ENCODE measurements at regions of chr1 and their contacts with region 1.

Region 1: DNA sequence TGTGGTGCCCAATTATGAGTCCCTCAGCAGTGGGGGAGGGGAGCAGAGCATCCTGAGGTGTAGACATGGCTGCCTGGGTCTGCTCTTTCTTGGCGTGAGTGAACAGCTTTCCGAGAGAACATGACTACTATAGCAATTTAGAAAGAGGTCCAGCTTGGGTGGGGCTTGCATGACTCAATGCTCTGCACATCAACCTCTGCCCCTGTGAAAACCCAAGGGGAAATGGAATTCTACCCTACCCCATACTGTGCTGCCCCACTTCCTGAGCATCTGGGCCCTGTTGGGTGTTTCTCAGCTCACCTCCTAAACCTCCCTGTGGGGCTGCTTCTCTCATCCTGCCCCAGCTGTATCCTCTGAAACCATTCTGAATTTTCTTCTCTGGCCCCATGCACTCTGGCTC is 8.2 kb upstream of the AZIN2 start:
- DNase-seq: no peak
- H3K4me3 ChIP-seq: no peak overlapping the region
- H3K27ac ChIP-seq: peak overlapping the region in 27 of 59 donors; percentile 14 to 99 (median 94)
- H3K27me3 ChIP-seq: no peaks in the 10 kb centered on the region
- CTCF ChIP-seq: no peak

Region 2: GRCh38 chr1:33055210-33056008 is 17.3 kb before region 1 on chr1:
- intact Hi-C with region 1: loop called in 1 of 2 experiments (anchors 2 kb)
- DNase-seq: peak in 9 of 10 donors; percentile 20 to 59 (median 50)
- H3K4me3 ChIP-seq: no peak overlapping the region
- H3K27ac ChIP-seq: peak overlapping the region in 38 of 59 donors; percentile 5 to 74 (median 36)
- H3K27me3 ChIP-seq: no peaks in the 10 kb centered on the region
- CTCF ChIP-seq: peak; percentile 45 to 88 (median 78)

Measured in dorsolateral prefrontal cortex (tissue), 120 donors.